Ascending aorta (tissue), 2 donors: ENCODE measurements at regions of chr10 and their contacts with region 1.

Region 1: GRCh38 chr10:34815185-34816084 is at the start of gene PARD3:
- DNase-seq: peak in 1 of 2 donors; percentile 71
- H3K4me3 ChIP-seq: peak within 1 kb of the TSS; percentile 92 to 93
- H3K27ac ChIP-seq: peak within 1 kb of the TSS; percentile 75 to 97
- H3K4me1 ChIP-seq: peaks cover 6 to 10% of the 10 kb centered on the region in 2 donors
- H3K27me3 ChIP-seq: no peaks in the 10 kb centered on the region
- CTCF ChIP-seq: no peak
- total RNA-seq, gene PARD3: 37.5 TPM

Region 2: DNA sequence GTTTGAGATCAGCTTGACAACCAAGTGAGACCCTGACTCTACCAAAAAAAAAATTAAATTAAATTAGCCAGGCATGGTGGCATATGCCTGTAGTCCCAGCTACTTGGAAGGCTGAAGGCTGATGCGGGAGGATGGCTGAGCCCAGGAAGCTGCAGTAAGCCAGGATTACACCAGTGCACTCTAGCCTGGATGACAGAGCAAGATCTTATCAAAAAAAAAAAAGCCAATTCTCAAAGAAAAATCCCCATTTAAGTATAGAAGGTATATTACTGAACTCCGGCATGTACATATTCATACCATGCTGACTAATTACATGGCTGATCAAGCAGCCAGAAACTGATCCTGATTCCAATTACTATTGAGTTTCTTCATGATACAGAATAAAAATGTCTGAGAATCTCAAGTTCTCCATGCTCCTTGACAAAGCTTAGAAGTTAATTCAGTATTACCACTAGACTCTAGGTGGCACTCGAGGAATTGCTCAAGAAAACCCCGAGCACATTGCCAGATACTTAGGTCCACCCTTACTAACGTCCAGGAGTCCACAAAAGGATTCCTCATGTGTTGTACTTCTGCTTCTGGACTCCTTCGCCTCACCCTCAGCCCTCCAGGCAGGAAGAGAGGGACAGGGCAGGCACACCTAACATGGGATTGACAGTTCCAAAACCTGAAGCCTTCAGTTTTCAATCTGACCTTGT is 149.3 kb before region 1 on chr10:
- intact Hi-C with region 1: loop called (anchors 5 kb)
- DNase-seq: peak in 1 of 2 donors; percentile 70
- H3K4me3 ChIP-seq: no peak overlapping the region
- H3K27ac ChIP-seq: no peak overlapping the region
- H3K4me1 ChIP-seq: no peaks in the 10 kb centered on the region
- H3K27me3 ChIP-seq: no peaks in the 10 kb centered on the region
- CTCF ChIP-seq: peak; percentile 47 to 73 (median 64)

Region 3: DNA sequence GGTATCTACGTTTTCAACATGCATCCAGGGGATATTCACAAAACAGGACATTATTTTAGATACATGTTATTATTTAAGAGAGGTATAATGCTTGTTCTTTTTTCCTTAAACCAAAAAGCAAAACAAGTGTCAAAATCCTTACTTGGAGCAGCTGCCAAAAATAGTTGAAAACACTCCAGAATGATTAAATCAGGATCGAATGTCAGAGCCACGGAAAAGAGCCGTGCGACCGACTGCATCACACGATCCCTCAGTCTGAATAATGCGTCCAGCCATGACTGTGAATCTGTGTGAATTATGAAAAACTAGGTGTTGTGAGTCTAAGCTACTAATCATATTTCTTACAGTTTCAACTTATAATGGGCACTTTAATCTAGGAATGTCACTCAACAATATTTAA is 126.4 kb before region 1 on chr10:
- intact Hi-C with region 1: loop called (anchors 5 kb)
- DNase-seq: no peak
- H3K4me3 ChIP-seq: no peak overlapping the region
- H3K27ac ChIP-seq: no peak overlapping the region
- H3K4me1 ChIP-seq: peaks cover 0 to 6% of the 10 kb centered on the region in 2 donors
- H3K27me3 ChIP-seq: no peaks in the 10 kb centered on the region
- CTCF ChIP-seq: no peak

Region 4: DNA sequence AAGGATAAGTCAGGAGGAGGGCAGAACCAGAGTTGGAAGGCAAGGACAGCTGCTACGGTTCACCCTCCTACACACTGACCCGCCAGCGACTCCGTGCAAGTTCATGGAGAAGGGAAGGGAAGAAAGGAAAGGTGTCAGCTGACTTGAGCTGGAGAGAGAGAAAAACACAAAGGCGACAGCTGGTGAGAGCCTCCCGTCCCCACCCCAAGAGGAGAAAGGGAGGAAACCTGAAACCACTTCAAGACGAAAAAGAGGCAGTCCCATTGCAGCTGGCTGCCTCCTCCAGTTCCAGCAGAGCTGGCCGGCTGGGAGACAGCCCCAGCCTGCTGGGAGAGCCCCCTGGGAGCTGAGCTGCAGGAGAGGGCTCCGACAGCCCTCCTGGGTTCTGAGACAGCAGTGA is 75.5 kb before region 1 on chr10:
- intact Hi-C with region 1: loop called (anchors 5 kb)
- DNase-seq: no peak
- H3K4me3 ChIP-seq: peak overlapping the region; percentile 23 to 45
- H3K27ac ChIP-seq: peak overlapping the region; percentile 18 to 27
- H3K4me1 ChIP-seq: peaks cover 0 to 6% of the 10 kb centered on the region in 2 donors
- H3K27me3 ChIP-seq: no peaks in the 10 kb centered on the region
- CTCF ChIP-seq: no peak

Region 5: GRCh38 chr10:34889004-34889869 is 73.8 kb after region 1 on chr10:
- intact Hi-C with region 1: no loop called
- DNase-seq: no peak
- H3K4me3 ChIP-seq: no peak overlapping the region
- H3K27ac ChIP-seq: no peak overlapping the region
- H3K4me1 ChIP-seq: no peaks in the 10 kb centered on the region
- H3K27me3 ChIP-seq: no peaks in the 10 kb centered on the region
- CTCF ChIP-seq: no peak